ENCODE measurements at regions of chr12 and their contacts with region 1.

Region 1: GRCh38 chr12:31659087-31659933 is at the start of gene ETFBKMT:
- DNase-seq: peak; percentile 84 to 97 (median 92)
- ATAC-seq: peak; percentile 99
- H3K4me3 ChIP-seq: peak within 1 kb of the TSS; percentile 82 to 87
- H3K4me3 Mint-ChIP-seq: peak within 1 kb of the TSS; percentile 98
- H3K27ac ChIP-seq: peak within 1 kb of the TSS; percentile 89 to 92
- H3K27ac Mint-ChIP-seq: peak within 1 kb of the TSS; percentile 100
- H3K4me1 ChIP-seq: peaks cover 11% of the 10 kb centered on the region
- H3K4me1 Mint-ChIP-seq: peaks cover 14% of the 10 kb centered on the region
- H3K27me3 ChIP-seq: no peaks in the 10 kb centered on the region
- H3K27me3 Mint-ChIP-seq: no peaks in the 10 kb centered on the region
- CTCF ChIP-seq: peak; percentile 22
- total RNA-seq, gene ETFBKMT: 0.41 to 1.0 TPM

Region 2: GRCh38 chr12:30695199-30696103 is 963.9 kb before region 1 on chr12 and contains the start of gene IPO8:
- CTCF ChIA-PET with region 1: no interaction called
- POLR2A ChIA-PET with region 1: no interaction called
- intact Hi-C with region 1: loop called in 1 of 2 experiments (anchors 10 kb)
- DNase-seq: peak; percentile 65 to 93 (median 85)
- ATAC-seq: peak; percentile 93
- H3K4me3 ChIP-seq: peak within 1 kb of the TSS; percentile 63 to 96
- H3K4me3 Mint-ChIP-seq: peak within 1 kb of the TSS; percentile 98
- H3K27ac ChIP-seq: peak within 1 kb of the TSS; percentile 50 to 59
- H3K27ac Mint-ChIP-seq: peak within 1 kb of the TSS; percentile 93
- H3K4me1 ChIP-seq: peaks cover 35% of the 10 kb centered on the region
- H3K4me1 Mint-ChIP-seq: peaks cover 51% of the 10 kb centered on the region
- H3K27me3 ChIP-seq: no peaks in the 10 kb centered on the region
- H3K27me3 Mint-ChIP-seq: no peaks in the 10 kb centered on the region
- CTCF ChIP-seq: no peak
- total RNA-seq, gene IPO8: 21.0 to 22.7 TPM

Region 3: GRCh38 chr12:31629756-31630732 is 29.3 kb before region 1 on chr12:
- CTCF ChIA-PET with region 1: no interaction called
- POLR2A ChIA-PET with region 1: no interaction called
- intact Hi-C with region 1: no loop called
- DNase-seq: no peak
- ATAC-seq: no peak
- H3K4me3 ChIP-seq: no peak overlapping the region
- H3K4me3 Mint-ChIP-seq: no peak overlapping the region
- H3K27ac ChIP-seq: no peak overlapping the region
- H3K27ac Mint-ChIP-seq: no peak overlapping the region
- H3K4me1 ChIP-seq: no peaks in the 10 kb centered on the region
- H3K4me1 Mint-ChIP-seq: no peaks in the 10 kb centered on the region
- H3K27me3 ChIP-seq: no peaks in the 10 kb centered on the region
- H3K27me3 Mint-ChIP-seq: peaks cover 2% of the 10 kb centered on the region
- CTCF ChIP-seq: no peak

Measured in CD8-positive, alpha-beta T cell (primary cell).